ENCODE measurements at regions of chr12 and their contacts with region 1.

Region 1: DNA sequence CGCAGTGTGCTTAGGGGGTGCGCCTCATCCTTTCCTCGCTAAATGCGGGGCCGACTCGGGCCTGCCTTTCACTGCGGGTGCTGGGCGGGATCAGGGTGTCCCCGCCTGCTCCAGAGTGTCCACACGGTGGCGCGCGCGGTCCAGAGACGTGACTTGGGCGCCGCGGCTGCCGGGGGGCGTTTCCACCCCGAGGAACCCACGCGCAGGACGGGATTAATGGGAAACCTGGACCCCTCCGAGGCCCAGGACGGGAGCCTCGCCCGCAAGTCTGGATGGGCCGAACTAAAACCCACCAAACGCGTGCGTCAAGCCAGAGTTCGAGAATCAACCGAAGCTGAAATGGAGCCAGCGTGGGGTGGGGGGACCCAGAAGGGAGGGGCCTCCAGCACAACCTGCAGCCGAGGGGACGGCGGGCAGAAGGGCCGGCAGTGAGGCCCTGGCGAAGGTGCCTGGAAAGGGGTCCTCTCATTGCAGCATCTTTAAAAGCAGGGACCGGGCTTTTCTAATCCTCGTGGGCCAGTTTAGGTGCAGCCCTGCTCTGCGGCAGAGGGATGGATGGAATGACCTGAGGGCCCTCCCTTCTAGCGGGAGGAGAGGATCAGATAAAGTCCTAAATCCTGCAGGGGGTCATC is 93.3 kb downstream of the NINJ2 start:
- DNase-seq: peak; percentile 77
- H3K4me3 ChIP-seq: peak overlapping the region; percentile 46 to 47
- H3K27ac ChIP-seq: peak overlapping the region; percentile 82 to 90
- H3K4me1 ChIP-seq: peaks cover 2% of the 10 kb centered on the region
- H3K27me3 ChIP-seq: no peaks in the 10 kb centered on the region
- CTCF ChIP-seq: peak; percentile 88 to 96 (median 90)
- POLR2A ChIP-seq: peak; percentile 11

Region 2: DNA sequence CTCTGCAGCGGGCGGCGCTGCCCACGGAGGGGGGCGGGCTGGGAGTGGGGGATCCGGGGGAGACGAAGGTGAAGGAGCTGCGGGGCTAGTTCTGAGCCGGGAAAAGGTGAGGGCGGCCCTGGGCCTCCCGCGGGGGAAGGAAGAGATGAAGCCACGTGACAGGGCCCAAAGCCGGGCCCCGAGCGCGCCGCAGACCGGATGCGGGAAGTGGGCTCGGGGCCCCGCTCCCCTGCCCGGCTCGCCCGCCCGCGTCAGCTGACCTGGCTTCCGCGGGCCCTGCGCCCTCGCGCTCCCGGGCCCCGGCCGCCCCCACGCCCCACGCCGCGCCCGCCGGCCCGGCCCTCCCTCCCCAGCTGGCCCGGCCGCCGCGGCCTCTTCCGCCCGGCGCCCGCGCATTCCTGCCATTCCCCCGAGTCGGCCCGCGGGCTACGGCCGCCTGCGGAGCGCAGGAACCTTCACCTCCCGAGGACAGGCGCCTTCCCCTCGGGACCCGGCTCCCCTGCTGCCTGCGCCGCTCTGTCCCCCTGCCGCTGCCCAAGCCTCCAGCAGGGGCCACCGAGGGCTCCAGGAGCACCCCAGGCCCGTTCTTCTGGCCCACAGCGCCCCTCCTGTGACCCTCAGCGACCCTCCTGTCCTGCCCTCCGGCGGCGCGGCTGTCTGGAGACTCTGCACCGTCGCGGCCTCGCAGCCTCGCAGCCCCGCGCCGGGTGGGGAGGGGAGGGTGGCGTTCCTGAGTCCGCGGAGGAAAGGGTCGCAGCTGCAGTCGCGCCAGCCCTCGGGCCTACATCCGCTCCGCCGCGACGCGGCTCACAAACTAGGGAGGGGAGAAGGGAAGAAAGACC is 72.9 kb after region 1 on chr12:
- intact Hi-C with region 1: loop called (anchors 5 kb)
- DNase-seq: peak; percentile 66
- H3K4me3 ChIP-seq: peak overlapping the region; percentile 58 to 63
- H3K27ac ChIP-seq: peak overlapping the region; percentile 89 to 93
- H3K4me1 ChIP-seq: peaks cover 8% of the 10 kb centered on the region
- H3K27me3 ChIP-seq: no peaks in the 10 kb centered on the region
- CTCF ChIP-seq: peak in 2 of 4 experiments; percentile 19 to 40
- POLR2A ChIP-seq: no peak

Region 3: DNA sequence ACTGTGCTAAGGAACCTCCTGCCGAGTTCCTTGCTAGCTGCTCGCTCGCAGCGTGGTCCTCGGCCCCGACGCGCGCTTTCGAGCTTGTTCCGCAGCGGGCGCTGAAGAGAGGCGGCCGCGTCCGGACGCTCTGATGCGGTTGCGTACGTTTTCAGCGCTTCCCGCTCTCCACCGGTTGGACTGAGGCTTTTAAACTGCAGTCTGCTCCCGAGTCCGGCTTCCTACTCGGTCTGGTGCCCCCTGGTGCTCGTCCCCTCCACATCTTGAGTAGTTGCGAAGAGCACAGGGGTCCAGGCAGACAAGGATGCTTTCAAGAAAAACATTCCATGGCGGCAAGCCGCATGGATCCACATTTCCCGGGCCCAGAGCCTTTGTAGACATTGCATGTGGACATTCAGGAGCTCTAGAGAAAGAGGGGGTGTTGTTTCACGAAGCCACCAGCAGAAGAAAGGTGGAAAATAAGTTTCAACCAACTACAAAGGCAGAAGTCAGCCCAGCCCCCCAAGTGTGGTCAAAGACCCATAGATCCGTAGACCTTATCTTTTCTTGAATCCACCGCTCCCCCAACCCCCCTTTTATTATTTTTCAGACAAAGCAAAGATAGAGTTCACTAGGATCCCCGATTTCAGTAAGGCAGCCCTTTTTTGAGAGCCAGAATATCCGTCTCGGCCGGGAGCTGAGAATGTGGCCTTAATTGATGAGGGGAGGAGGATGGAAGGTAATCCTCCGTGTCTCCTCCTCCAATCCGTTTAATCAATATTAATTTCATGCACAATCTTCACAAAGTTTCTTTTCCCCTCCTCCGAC is 181.5 kb after region 1 on chr12:
- intact Hi-C with region 1: loop called (anchors 2 kb)
- DNase-seq: peak; percentile 85
- H3K4me3 ChIP-seq: peak overlapping the region; percentile 92 to 96
- H3K27ac ChIP-seq: peak overlapping the region; percentile 99
- H3K4me1 ChIP-seq: peaks cover 11% of the 10 kb centered on the region
- H3K27me3 ChIP-seq: no peaks in the 10 kb centered on the region
- CTCF ChIP-seq: peak; percentile 38 to 76 (median 74)
- POLR2A ChIP-seq: peak; percentile 54

Region 4: GRCh38 chr12:810671-811415 is 240.9 kb after region 1 on chr12:
- intact Hi-C with region 1: loop called (anchors 2 kb)
- DNase-seq: no peak
- H3K4me3 ChIP-seq: no peak overlapping the region
- H3K27ac ChIP-seq: no peak overlapping the region
- H3K4me1 ChIP-seq: no peaks in the 10 kb centered on the region
- H3K27me3 ChIP-seq: no peaks in the 10 kb centered on the region
- CTCF ChIP-seq: no peak
- POLR2A ChIP-seq: no peak

Region 5: DNA sequence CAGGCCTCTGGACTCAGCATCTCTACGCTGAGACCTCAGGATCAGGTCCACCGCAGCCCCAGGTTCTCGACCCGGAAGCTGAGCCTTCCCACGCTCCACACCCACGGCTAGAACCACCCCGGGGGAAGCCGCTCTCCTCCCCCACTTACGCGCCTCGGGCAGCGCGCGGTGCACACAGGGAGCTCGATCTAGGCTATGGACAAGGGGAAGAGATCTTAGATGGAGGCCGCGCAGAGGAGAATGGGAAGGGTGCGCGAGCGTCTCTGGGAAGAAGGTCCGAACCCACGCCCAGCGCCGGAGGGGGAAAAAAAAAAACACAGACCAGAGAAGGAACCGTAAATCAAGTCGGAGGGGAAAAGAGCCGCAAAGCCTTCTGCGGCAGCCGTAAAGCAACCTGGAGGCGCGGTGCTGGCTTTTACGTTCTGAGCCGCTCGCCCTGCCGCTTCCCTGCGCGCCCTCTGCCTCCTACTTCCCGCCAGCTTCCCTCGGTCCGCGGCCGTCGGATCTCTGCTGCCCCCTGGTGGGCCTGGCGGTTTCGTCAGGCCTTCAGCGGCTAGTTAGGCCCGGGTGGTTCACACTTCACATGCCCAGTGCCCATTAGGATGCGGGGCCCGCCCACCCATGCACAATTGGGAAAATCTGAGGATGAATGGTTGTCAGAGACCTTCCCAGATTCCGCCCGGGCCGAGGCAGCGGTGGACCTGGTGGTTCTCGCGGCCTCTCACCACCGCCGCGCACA is 379.7 kb after region 1 on chr12 and contains the start of gene RAD52:
- intact Hi-C with region 1: loop called (anchors 2 kb)
- DNase-seq: peak; percentile 97
- H3K4me3 ChIP-seq: peak within 1 kb of the TSS; percentile 76 to 78
- H3K27ac ChIP-seq: peak within 1 kb of the TSS; percentile 84 to 91
- H3K4me1 ChIP-seq: no peaks in the 10 kb centered on the region
- H3K27me3 ChIP-seq: no peaks in the 10 kb centered on the region
- CTCF ChIP-seq: peak; percentile 98 to 99 (median 99)
- POLR2A ChIP-seq: peak; percentile 63
- total RNA-seq, gene RAD52: 16.7 to 30.5 TPM

Region 6: DNA sequence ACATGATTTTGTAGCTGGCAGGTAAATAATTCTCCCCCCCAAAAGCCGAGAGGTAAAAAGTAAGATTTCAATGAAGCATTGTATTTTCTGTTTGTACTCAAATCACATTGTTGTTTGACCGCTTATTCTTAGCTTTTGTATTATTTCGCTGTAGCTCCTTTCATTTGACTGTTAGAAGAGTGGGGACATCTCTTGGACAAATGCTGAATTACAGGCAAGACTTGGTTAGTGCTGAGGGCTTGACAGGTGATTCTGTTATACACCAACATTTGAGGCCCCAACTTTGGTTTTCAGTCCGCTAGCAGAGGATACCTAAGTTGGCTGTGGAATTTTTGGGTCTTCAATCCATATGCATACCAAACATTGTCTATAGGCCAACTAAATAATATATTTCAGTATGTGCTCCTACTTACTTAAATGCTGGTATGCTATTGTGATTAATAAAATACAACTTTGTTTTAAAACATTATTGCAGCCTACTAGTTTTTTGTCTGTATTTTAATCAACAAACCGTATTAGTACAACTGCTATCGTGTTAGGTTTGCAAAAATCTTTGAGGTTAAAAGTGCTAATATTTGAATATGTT is 523.3 kb after region 1 on chr12:
- intact Hi-C with region 1: loop called (anchors 5 kb)
- DNase-seq: peak; percentile 33
- H3K4me3 ChIP-seq: no peak overlapping the region
- H3K27ac ChIP-seq: no peak overlapping the region
- H3K4me1 ChIP-seq: no peaks in the 10 kb centered on the region
- H3K27me3 ChIP-seq: no peaks in the 10 kb centered on the region
- CTCF ChIP-seq: peak in 3 of 4 experiments; percentile 38 to 74 (median 67)
- POLR2A ChIP-seq: no peak